A673 (cell line): ENCODE measurements at regions of chr12 and their contacts with region 1.

Region 1: DNA sequence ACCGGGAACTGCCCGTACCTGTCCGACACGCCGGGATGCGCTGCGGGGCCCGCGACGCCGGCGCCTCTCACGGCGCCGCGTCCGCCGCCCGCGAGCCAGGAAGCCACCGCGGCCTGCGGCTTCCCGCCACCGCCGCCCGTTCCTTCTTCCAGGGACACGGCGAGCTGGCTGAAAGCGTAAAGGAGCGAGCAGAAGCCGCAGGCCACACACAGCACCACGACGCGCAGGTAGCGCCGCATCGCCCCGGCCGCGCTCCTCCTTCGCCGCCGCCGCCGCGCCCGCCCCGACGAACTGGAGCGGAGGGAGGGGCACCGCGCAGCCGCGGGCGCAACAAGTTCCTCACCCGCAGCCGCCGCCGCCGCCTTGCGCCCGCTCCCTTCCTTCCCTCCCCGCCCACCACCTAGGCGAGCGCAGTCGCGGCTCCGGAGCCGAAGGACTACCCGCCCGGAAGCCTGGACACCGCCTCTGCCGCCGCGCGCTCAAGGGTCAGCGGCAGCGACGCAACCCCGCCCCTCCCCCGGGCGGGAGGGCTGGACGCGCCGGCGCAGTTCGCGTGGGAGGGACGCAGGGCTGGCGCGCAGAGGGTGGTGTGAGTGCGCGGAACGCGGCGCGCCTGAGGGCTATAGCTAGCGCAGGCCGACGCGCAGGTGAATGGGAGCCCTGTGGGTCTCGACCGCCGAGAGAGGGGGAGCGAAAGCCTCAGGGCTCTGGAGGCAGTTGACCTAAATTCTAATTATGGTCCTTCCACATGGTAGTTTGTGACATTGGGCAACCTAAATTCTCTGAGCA is at the start of gene GXYLT1:
- DNase-seq: peak; percentile 93
- H3K4me3 ChIP-seq: peak within 1 kb of the TSS; percentile 83
- H3K27ac ChIP-seq: peak within 1 kb of the TSS; percentile 71
- H3K4me1 ChIP-seq: peaks cover 21% of the 10 kb centered on the region
- H3K27me3 ChIP-seq: no peaks in the 10 kb centered on the region
- CTCF ChIP-seq: no peak
- total RNA-seq, gene GXYLT1: 25.0 and 26.7 TPM in 2 replicates

Region 2: GRCh38 chr12:42325653-42326474 is 181.3 kb after region 1 on chr12 and contains the starts of genes PPHLN1 and ZCRB1:
- CTCF ChIA-PET with region 1: no interaction called
- POLR2A ChIA-PET with region 1: no interaction called
- intact Hi-C with region 1: loop called (anchors 5 kb)
- DNase-seq: peak; percentile 89
- H3K4me3 ChIP-seq: peak within 1 kb of the TSS; percentile 79
- H3K27ac ChIP-seq: peak within 1 kb of the TSS; percentile 86
- H3K4me1 ChIP-seq: peaks cover 14% of the 10 kb centered on the region
- H3K27me3 ChIP-seq: no peaks in the 10 kb centered on the region
- CTCF ChIP-seq: no peak
- total RNA-seq, gene PPHLN1: 90.1 and 96.2 TPM in 2 replicates
- total RNA-seq, gene ZCRB1: 110 TPM in 2 replicates